Naive thymus-derived CD8-positive, alpha-beta T cell (primary cell): ENCODE measurements at regions of chr18 and their contacts with region 1.

Region 1: GRCh38 chr18:58687871-58688308 is 16.6 kb downstream of the MALT1 start:
- DNase-seq: peak in 9 of 10 donors; percentile 34 to 87 (median 71)
- ATAC-seq: peak; percentile 92 to 97
- H3K4me3 Mint-ChIP-seq: peak overlapping the region; percentile 60 to 90 (median 82)
- H3K27ac Mint-ChIP-seq: peak overlapping the region; percentile 91 to 100 (median 96)
- H3K4me1 Mint-ChIP-seq: peaks cover 30 to 79% (median 72%) of the 10 kb centered on the region in 4 donors
- H3K27me3 Mint-ChIP-seq: no peaks in the 10 kb centered on the region

Region 2: GRCh38 chr18:58661423-58661822 is 26.5 kb before region 1 on chr18:
- POLR2A ChIA-PET with region 1: interaction called, 13 read pairs
- DNase-seq: no peak
- ATAC-seq: no peak
- H3K4me3 Mint-ChIP-seq: no peak overlapping the region
- H3K27ac Mint-ChIP-seq: peak overlapping the region in 1 of 10 donors; percentile 56
- H3K4me1 Mint-ChIP-seq: peaks cover 28 to 76% (median 50%) of the 10 kb centered on the region in 4 donors
- H3K27me3 Mint-ChIP-seq: no peaks in the 10 kb centered on the region